Left cardiac atrium (tissue), 4 donors: ENCODE measurements at regions of chr12 and their contacts with region 1.

Region 1: DNA sequence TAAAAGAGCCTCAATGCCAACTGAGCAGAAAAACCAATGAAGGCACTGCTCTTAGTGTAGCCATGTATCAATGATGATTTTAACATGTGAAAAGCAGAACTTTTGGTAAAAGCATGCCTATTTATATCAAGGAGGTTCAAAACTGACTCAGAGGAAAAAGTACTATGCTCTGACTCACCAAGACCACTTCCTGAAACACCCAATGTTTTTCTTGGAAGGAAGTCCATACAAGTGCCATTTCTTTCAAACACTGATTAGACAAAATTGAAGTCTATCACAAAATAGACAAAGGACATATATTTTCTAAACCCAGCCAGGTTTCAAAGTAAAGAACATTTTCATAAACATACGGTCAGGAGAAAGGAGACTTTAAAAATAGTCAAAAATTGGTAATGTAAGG is 88.6 kb downstream of the EPS8 start:
- DNase-seq: no peak
- ATAC-seq: peak; percentile 70 to 92

Region 2: GRCh38 chr12:15590180-15590826 is 110.3 kb before region 1 on chr12:
- intact Hi-C with region 1: loop called (anchors 10 kb)
- DNase-seq: peak; percentile 36
- ATAC-seq: peak; percentile 87 to 93